Gastrocnemius medialis (tissue), 4 donors: ENCODE measurements at regions of chr2 and their contacts with region 1.

Region 1: DNA sequence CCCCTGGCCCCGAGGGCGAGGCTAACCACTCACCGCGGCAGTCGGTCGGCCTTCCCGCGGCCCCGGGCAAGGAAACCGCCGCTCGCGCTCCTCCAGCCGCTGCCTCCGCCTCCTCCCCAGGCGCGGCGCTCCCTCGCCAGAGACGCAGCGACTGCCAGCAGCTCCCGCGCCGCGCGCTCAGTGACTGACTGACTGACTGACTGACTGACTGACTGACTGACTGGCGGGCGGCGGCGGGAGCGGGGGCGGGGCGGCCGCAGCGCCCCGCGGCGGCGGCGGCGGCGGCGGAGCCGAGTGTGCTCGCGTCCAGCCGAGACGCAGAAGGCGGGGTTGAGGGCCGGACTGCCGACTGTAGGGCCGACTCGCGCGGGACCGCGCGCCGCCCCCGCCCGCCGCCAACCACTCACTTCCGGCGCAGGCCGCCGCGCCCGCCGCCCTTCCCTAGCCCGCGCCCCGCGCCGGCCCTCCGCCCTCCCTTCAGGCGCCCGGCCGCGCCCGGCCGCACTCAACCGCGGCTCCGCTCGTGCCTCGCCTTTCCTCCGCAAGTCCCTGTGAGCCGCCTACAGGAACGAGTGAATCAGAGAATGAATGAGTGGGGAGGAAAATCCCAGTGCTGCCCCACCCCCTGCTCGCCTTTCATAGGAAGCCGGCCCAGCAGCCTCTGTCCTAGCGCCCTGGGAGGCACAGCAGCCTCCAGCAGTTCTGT is at the start of gene RAPH1:
- DNase-seq: peak; percentile 68 to 78
- ATAC-seq: peak; percentile 89 to 91
- H3K4me3 ChIP-seq: peak within 1 kb of the TSS; percentile 71 to 91 (median 80)
- H3K27ac ChIP-seq: peak within 1 kb of the TSS; percentile 80 to 88 (median 86)
- H3K4me1 ChIP-seq: peaks cover 6 to 19% of the 10 kb centered on the region in 2 donors
- H3K27me3 ChIP-seq: no peaks in the 10 kb centered on the region
- CTCF ChIP-seq: peak in 1 of 5 experiments; percentile 22
- POLR2A ChIP-seq: peak; percentile 61 to 81
- total RNA-seq, gene RAPH1: 17.6 to 29.7 (median 21.7) TPM

Region 2: DNA sequence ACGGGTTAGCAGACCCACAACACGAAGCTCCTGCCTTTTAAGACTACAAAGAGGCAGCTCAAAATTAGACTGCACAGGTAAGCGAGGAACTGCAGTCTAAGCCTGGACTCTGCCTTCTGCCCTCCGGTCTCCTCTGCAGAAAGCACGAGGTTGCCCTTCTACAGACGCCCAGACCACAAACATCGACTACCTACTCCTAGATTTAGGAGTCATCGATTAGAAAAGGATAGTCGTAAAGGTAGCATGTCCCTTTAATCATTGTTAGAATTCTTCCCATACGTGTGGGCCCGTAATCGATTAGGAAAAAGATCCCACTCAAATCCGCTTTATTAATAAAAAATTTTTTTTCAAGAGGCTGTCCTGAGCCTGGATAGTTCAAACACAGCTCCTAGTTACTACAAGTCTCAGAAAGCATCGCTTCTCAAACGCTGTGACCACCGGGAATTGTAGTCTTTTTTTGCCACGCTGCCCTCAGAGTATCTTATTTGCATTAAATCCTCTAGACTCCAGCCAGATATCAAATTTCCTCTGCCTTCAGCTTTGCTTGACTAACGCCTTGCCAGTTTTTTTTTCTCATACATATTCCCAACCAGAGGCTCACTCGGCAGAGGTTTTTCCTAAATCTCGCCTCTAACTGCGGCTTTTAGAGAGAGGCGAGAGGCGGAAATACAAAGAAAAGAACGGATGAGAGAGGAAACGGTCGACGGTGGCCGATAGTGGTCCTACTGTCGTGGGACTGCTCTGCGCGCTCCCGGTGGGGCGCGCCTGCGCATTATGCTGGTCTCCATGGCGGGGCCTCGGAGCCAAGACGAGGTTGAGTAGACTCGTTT is 623.5 kb before region 1 on chr2 and contains the starts of genes CARF and WDR12:
- in situ Hi-C with region 1: no loop called
- intact Hi-C with region 1: no loop called
- DNase-seq: peak; percentile 87 to 88
- ATAC-seq: peak; percentile 94 to 96
- H3K4me3 ChIP-seq: peak within 1 kb of the TSS; percentile 83 to 100 (median 92)
- H3K27ac ChIP-seq: peak within 1 kb of the TSS; percentile 90 to 99 (median 94)
- H3K4me1 ChIP-seq: peaks cover 25 to 27% of the 10 kb centered on the region in 2 donors
- H3K27me3 ChIP-seq: no peaks in the 10 kb centered on the region
- CTCF ChIP-seq: no peak
- POLR2A ChIP-seq: peak; percentile 41 to 56
- total RNA-seq, gene CARF: 2.2 to 12.2 (median 4.0) TPM
- total RNA-seq, gene WDR12: 5.3 to 83.2 (median 18.7) TPM

Region 3: GRCh38 chr2:203636588-203637470 is 101.6 kb after region 1 on chr2:
- in situ Hi-C with region 1: no loop called
- intact Hi-C with region 1: loop called (anchors 5 kb)
- DNase-seq: peak; percentile 58 to 72
- ATAC-seq: peak; percentile 99 to 100
- H3K4me3 ChIP-seq: no peak overlapping the region
- H3K27ac ChIP-seq: peak overlapping the region; percentile 53 to 63 (median 60)
- H3K4me1 ChIP-seq: peaks cover 11 to 14% of the 10 kb centered on the region in 2 donors
- H3K27me3 ChIP-seq: no peaks in the 10 kb centered on the region
- CTCF ChIP-seq: no peak
- POLR2A ChIP-seq: no peak